ENCODE measurements at regions of chr12 and their contacts with region 1.

Region 1: DNA sequence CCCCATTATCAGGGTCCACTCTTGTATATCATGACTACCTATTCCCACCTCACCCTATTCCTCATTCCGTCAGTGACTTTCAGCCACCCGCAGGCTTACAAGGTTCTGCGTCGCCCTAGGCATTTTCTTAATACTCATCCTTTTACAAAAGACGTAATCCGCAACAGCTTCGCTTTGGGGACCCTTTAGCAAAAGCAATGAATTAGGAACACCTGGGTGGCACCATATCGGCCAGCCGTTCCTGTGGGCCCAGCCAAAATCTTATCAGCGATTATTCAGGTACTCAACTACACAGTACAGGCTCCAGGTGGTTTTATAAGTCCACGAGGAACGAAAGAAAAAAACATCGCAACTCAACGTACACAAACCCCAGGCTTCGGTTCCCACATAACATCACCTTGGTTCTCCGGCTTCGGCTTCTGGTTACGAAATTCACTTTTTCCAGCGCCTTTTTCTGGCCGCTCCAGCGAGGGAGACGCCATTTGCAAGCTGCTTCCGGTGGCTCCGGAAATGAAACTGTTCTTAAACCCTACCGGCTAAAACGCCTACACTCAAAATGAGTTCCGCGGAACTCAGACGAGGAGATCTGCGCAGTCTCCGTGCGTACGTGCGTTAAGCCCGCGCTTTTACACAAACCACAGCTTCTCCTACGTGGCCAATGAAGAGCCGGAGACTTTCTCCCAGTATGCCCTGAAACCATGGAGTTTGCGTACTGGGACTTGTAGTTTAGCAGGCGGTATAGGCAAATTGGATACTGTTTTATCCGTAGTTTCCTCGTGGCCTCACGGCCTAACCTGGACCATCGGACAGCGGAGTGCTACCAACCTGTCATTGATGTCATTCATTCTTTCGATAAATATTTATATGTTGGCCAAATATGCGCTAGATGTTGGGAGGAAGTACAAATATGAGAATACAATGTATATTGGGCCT is at the start of gene KRR1:
- DNase-seq: peak; percentile 97
- total RNA-seq, gene KRR1: 47.6 TPM

Region 2: DNA sequence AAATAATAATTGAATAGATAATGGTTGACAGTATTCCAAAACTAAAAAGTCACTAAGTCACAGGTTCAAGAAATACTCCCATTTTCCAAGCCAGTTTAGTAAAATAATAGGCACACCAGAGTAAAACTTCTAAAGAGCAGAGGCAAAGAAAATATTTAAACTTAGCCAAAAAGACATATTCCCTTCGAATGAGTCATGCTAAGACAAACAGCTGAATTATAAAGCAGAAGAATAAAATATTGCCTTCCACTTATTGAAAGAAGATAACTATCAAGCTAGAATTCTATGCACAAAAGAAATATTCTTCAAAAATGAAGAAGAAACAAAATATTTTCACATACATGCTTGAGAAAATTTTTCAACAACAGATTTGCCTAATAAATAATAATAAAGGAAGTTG is 285.8 kb before region 1 on chr12:
- intact Hi-C with region 1: no loop called
- DNase-seq: no peak

Region 3: DNA sequence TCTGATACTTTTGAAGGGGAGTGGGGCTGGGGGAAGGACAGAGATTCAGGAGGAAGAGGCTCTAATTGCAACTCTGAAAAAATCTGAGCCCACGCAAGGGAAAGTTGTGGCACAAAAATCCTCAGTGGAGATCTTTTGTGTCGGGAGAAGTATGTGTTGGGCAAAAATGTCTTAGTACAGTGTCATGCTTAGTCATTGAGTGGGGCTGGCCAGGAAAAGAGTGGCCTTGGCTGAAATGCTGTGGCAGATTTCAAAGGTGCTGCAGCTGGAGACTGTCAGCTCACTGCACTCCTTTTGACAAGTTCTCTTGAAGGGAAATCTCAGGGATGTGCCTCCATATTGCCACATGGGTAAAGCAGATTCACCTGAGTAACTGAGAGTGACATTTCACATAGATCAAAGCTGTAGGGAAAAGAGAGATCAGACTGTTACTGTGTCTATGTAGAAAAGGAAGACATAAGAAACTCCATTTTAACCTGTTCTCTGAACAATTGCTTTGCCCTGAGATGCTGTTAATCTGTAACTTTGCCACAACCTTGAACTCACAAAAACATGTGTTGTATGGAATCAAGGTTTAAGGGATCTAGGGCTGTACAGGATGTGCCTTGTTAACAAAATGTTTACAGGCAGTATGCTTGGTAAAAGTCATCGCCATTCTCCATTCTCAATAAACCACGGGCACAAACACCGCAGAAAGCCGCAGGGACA is 66.8 kb before region 1 on chr12:
- intact Hi-C with region 1: no loop called
- DNase-seq: no peak

Region 4: GRCh38 chr12:76455582-76456345 is 944.4 kb after region 1 on chr12:
- intact Hi-C with region 1: loop called in 1 of 2 experiments (anchors 10 kb)
- DNase-seq: no peak

Measured in posterior vena cava (tissue), 2 donors.